AG04449 (cell line): ENCODE measurements at regions of chr2 and their contacts with region 1.

Region 1: DNA sequence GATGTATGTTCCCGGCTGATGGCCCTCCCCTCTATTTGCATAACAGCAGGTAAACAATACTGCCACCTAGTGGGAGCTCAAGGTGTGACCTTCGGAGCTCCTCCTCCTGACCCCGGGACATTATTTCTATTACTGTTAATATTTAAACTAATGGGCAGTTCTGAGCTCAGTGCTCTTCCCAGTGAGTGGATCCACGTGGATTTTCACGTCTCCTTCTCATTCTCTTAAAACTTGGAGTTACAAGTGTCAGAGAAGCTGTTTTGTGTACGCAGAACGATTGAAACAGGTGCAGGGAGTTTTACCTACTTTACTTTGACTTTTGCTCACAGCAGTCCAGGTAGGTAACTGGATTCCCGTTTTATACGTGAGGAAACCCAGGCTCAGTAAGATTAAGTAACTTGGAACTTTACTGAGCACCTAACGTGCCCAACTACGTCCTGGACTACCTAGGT is 127.3 kb downstream of the PRKCE start:
- DNase-seq: no peak
- H3K4me3 ChIP-seq: no peak overlapping the region
- CTCF ChIP-seq: peak; percentile 67

Region 2: DNA sequence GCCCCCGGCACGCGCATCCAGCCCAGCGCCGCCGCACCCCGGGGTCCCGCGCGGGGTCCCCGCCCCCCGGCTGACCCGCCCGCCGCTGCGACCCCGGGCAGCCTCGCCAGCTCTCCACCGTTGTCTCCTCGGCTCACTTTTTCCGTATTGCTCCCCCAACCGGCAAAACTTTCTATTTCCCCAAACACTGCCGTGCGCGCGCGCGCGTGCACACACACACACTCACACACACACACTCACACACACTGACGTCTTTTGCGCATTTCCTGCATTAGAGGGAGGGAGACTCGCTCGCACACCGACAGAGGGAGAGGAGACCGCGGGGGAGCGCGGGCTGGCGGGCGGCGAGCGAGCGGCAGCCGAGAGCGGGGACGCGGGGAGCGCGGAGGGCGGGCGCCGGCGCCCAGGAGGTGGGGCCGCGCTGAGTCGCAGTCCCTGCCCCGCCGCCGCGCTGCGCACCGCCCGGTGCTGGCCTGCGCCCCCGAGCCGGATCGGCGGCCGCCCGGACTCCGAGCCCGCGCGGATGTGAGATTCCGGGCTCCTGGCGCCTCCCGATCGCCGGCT is 127.8 kb before region 1 on chr2:
- CTCF ChIA-PET with region 1: interaction called, 53 read pairs
- POLR2A ChIA-PET with region 1: no interaction called
- DNase-seq: peak; percentile 92
- H3K4me3 ChIP-seq: peak overlapping the region; percentile 80
- CTCF ChIP-seq: peak; percentile 56

Region 3: GRCh38 chr2:45675263-45675812 is 103.4 kb before region 1 on chr2:
- CTCF ChIA-PET with region 1: no interaction called
- POLR2A ChIA-PET with region 1: no interaction called
- DNase-seq: no peak
- H3K4me3 ChIP-seq: no peak overlapping the region
- CTCF ChIP-seq: no peak

Region 4: GRCh38 chr2:45765728-45766254 is 13.0 kb before region 1 on chr2:
- CTCF ChIA-PET with region 1: interaction called, 29 read pairs
- POLR2A ChIA-PET with region 1: no interaction called
- DNase-seq: no peak
- H3K4me3 ChIP-seq: no peak overlapping the region
- CTCF ChIP-seq: no peak

Region 5: DNA sequence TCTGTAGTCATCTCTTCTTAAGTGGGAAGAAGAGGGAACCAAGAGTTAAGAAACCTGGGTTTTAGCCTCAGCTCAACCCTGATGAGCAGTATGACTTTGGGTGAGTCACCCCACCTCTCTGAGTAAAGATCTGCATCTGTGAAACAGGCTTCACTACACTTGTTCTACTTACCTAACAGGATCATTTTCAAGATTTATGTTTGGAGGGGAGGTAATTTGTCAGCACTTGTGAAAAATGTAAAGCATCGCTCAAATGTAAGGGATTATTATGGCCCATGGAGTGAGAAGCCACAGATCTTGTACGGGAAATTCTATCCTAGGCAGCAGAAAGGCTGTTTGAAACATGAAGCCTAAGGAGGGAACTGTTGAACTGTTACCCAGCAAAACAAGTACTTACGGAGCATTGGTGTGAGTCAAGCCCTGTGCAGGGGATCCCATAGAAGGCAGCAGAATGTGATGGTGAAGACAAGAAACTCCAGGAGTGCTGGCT is 33.3 kb after region 1 on chr2:
- CTCF ChIA-PET with region 1: interaction called, 14 read pairs
- POLR2A ChIA-PET with region 1: no interaction called
- DNase-seq: peak; percentile 50
- H3K4me3 ChIP-seq: no peak overlapping the region
- CTCF ChIP-seq: no peak